ENCODE measurements at regions of chr17 and their contacts with region 1.

Region 1: DNA sequence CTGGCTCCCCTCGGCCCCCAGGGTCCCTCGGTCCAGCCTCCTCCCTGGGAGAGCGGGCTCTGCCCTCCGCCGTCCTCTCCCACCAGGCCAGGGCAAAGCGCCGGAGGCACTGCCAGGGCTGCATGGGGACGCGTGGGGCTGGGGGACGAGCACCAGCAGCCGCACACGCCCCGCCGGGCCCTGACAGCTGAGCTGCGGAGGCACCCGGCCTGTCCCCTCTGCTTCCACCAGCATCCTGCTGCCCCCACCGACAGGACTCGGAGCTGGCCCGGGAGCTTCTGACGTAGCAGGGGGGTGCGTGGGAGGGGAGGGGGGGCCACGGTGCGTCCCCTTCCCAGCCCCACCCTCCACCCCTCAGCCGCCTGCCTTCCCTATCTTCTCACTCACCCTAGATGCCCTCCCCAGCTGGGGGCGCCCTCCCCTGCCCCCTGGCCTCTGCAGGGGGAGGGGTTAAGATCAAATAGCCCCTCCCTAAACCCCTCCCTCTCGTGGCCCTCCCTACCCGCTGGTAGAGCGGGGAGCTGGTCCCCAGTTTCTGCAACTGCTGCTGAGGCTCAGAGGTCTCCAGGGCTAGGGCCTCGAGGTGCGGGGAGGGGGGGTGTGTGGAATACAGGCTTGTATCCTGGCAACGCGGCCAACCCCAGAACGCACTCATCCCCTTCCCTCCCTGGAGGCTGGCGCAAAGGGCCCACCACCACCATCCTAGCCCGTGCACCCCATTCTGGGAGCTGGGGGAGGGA is 1.1 kb downstream of the SRCIN1 start:
- DNase-seq: peak; percentile 77 to 87 (median 84)
- ATAC-seq: peak; percentile 69
- H3K4me3 ChIP-seq: 0 out of 2 replicates have a peak overlapping the region, but pooled peaks have one; percentile 68
- H3K27ac ChIP-seq: no peak overlapping the region
- H3K4me1 ChIP-seq: peaks cover 11 to 52% of the 10 kb centered on the region in 2 experiments
- H3K27me3 ChIP-seq: peaks cover 0 to 26% of the 10 kb centered on the region in 2 experiments; a peak in 3 of 5 replicates
- CTCF ChIP-seq: peak; percentile 29 to 42 (median 42); a peak in 5 of 6 replicates
- EP300 ChIP-seq: no peak
- POLR2A ChIP-seq: no peak
- RAD21 ChIP-seq: no peak

Region 2: DNA sequence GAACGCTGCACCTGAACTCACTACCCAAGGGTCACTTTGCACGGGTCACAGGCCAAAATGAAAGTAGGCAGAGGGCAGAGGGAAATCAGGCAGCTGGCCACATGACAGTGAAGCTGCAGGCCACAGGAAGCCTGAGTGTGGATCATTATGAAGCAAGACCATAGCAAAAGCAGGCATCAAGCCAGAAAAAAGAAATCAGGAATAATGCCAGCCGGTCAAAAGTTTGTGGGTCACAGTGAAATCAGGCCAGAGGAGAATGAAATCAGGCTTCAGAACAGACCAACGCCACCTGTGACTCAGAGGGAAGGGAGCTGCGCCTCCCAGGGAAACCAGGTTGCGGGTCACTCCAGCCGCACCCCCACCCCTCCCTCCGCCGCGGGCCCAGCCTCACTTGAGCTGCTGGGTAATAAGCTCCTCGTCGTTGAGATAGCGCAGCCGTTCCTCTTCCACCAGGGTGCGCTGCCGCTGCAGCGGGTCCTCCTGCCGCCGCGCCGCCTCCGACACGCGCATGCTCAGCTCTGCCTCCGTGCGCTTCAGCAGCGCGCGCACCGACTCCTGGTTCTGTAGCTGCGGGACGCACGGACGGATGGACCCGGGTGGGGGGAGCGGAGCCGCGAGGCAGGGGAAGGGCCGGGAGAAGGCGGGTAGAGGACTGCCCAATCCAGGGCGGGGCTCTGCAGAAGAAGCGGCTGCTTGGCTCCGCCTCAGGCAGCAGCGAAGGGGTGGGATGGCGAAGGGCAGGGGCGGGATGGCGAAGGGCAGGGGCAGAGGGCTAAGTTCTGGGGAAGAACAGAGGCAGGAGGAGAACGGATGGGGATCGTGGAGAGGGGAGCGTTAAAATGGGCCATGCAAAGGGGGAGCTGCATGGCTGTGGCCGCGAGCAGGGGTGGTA is 46.6 kb before region 1 on chr17:
- CTCF ChIA-PET with region 1: interaction called, 4 read pairs
- POLR2A ChIA-PET with region 1: no interaction called
- in situ Hi-C with region 1: no loop called
- intact Hi-C with region 1: loop called (anchors 5 kb)
- DNase-seq: peak; percentile 91 to 94 (median 92)
- ATAC-seq: peak; percentile 93
- H3K4me3 ChIP-seq: peak overlapping the region; percentile 37
- H3K27ac ChIP-seq: no peak overlapping the region
- H3K4me1 ChIP-seq: peaks cover 19 to 46% of the 10 kb centered on the region in 2 experiments
- H3K27me3 ChIP-seq: peaks cover 8 to 39% of the 10 kb centered on the region in 2 experiments; a peak in 4 of 5 replicates
- CTCF ChIP-seq: peak; percentile 92 to 95 (median 95)
- EP300 ChIP-seq: no peak
- POLR2A ChIP-seq: no peak
- RAD21 ChIP-seq: peak; percentile 53 to 87; a peak in 3 of 4 replicates

Region 3: GRCh38 chr17:38893607-38894006 is 289.0 kb after region 1 on chr17:
- CTCF ChIA-PET with region 1: no interaction called
- POLR2A ChIA-PET with region 1: no interaction called
- in situ Hi-C with region 1: no loop called
- intact Hi-C with region 1: no loop called
- DNase-seq: peak in 1 of 4 experiments; percentile 43
- ATAC-seq: peak; percentile 41
- H3K4me3 ChIP-seq: no peak overlapping the region
- H3K27ac ChIP-seq: peak overlapping the region; percentile 16; the same call in 1 of the 3 replicates
- H3K4me1 ChIP-seq: peaks cover 36 to 44% of the 10 kb centered on the region in 2 experiments
- H3K27me3 ChIP-seq: no peaks in the 10 kb centered on the region
- CTCF ChIP-seq: no peak
- EP300 ChIP-seq: no peak
- POLR2A ChIP-seq: no peak
- RAD21 ChIP-seq: no peak

Region 4: GRCh38 chr17:39144416-39144840 is 539.8 kb after region 1 on chr17:
- CTCF ChIA-PET with region 1: no interaction called
- POLR2A ChIA-PET with region 1: no interaction called
- in situ Hi-C with region 1: no loop called
- intact Hi-C with region 1: no loop called
- DNase-seq: no peak
- ATAC-seq: no peak
- H3K4me3 ChIP-seq: no peak overlapping the region
- H3K27ac ChIP-seq: no peak overlapping the region
- H3K4me1 ChIP-seq: peaks cover 0 to 8% of the 10 kb centered on the region in 2 experiments; a peak in 1 of 5 replicates
- H3K27me3 ChIP-seq: peaks cover 6 to 51% of the 10 kb centered on the region in 2 experiments; a peak in 3 of 5 replicates
- CTCF ChIP-seq: no peak
- EP300 ChIP-seq: no peak
- POLR2A ChIP-seq: no peak
- RAD21 ChIP-seq: no peak